ENCODE measurements at regions of chr20 and their contacts with region 1.

Region 1: DNA sequence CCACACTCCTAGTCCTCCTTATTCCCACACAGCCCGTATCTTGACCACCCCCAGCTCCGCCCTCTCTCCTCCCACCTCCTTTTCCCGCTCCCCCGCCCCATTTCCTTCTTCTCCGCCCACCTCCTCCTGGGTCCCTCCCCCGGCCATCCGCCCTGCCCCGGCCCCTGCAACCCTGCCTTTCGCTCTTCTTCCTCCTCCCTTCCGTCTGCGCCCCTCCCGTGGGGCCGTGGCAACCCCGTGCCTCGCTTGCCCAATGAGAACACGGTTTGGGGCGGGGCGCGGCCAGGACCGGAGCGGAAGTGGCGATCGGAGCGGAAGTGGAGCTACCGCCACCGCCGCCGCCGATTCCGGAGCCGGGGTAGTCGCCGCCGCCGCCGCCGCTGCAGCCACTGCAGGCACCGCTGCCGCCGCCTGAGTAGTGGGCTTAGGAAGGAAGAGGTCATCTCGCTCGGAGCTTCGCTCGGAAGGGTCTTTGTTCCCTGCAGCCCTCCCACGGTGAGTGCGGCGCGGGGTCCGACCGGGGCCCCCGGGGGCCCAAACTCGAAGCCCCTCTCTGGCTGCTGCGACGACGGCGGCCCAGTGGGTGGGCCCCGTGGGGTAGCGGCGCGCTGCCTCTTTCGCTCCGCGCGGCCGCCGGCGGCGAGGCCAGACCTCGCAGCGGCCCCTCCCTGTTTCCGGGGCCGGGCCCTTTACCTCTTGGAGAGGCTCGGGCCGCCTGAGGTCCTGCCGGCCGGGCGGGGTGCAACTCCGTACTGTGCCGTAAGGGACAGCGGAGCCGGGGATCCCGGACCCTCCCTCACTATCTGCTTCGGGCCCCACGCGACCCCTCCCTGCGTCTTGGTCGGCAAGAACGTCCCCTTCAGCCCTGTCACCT is at the start of gene YWHAB:
- DNase-seq: peak; percentile 98
- H3K4me3 ChIP-seq: peak within 1 kb of the TSS; percentile 89 to 98 (median 97)
- H3K27ac ChIP-seq: peak within 1 kb of the TSS; percentile 84
- H3K4me1 ChIP-seq: peaks cover 33% of the 10 kb centered on the region
- H3K27me3 ChIP-seq: no peaks in the 10 kb centered on the region
- CTCF ChIP-seq: no peak
- POLR2A ChIP-seq: peak; percentile 54
- total RNA-seq, gene YWHAB: 255 and 256 TPM in 2 replicates

Region 2: GRCh38 chr20:44475694-44476560 is 409.7 kb before region 1 on chr20 and contains the start of gene TTPAL:
- CTCF ChIA-PET with region 1: no interaction called
- POLR2A ChIA-PET with region 1: no interaction called
- dilution Hi-C with region 1: no loop called
- intact Hi-C with region 1: loop called (anchors 10 kb)
- DNase-seq: peak; percentile 83
- H3K4me3 ChIP-seq: peak within 1 kb of the TSS; percentile 42 to 68 (median 52)
- H3K27ac ChIP-seq: peak within 1 kb of the TSS; percentile 56
- H3K4me1 ChIP-seq: peaks cover 13% of the 10 kb centered on the region
- H3K27me3 ChIP-seq: peaks cover 0 to 4% of the 10 kb centered on the region in 2 experiments
- CTCF ChIP-seq: peak; percentile 4 to 28
- POLR2A ChIP-seq: peak; percentile 91
- total RNA-seq, gene TTPAL: 8.0 and 8.7 TPM in 2 replicates

Region 3: DNA sequence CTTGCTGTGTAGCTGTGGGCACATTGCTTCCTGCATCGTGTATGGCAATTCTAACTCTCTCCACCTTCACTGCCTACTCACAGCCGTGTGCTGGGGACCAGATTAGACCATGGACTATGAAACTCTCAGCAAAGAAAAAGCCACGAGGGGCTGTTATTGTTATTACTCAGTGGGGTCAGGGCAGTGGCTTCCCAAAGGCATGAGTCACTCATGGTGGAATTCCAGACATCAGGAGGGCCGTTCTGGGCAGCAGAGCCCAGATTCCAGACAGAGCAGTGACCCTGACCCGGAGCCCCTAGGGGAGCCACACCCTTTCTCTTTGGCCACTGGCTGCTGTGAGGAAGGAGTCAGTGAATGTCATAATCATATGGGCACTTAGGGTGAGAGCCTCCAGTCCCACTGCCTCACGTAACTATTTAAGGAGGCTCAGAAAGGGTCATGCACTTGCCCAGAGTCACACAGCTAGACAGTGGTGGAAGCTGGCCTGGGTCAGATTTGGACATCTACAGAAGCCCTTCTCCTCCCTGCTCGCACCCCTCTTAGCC is 192.6 kb before region 1 on chr20:
- CTCF ChIA-PET with region 1: interaction called, 3 read pairs
- POLR2A ChIA-PET with region 1: no interaction called
- dilution Hi-C with region 1: no loop called
- intact Hi-C with region 1: loop called (anchors 2 kb)
- DNase-seq: peak; percentile 98
- H3K4me3 ChIP-seq: no peak overlapping the region
- H3K27ac ChIP-seq: peak overlapping the region; percentile 93
- H3K4me1 ChIP-seq: peaks cover 33% of the 10 kb centered on the region
- H3K27me3 ChIP-seq: no peaks in the 10 kb centered on the region
- CTCF ChIP-seq: no peak
- POLR2A ChIP-seq: no peak

Region 4: DNA sequence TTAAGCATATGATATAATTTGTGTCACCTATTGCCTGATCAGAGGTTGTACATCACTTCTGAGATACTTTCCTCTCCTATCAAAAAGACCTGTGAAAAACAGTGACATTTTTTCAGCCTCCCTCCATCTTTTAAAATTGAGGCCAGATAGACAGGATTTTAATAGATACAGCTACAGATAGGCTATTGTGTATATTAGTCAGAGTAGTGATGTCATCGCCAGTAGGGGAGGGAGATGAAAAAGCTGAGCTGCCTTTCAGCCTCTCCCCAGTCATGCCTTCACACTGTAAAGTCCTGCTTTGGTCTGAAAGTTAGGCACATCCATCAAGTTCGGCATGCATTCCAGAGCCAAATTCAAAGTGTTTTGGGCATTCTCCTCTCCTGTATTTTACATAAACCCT is 16.3 kb after region 1 on chr20:
- CTCF ChIA-PET with region 1: interaction called, 12 read pairs
- POLR2A ChIA-PET with region 1: interaction called, 3 read pairs
- dilution Hi-C with region 1: no loop called
- intact Hi-C with region 1: loop called (anchors 2 kb)
- DNase-seq: no peak
- H3K4me3 ChIP-seq: no peak overlapping the region
- H3K27ac ChIP-seq: no peak overlapping the region
- H3K4me1 ChIP-seq: peaks cover 12% of the 10 kb centered on the region
- H3K27me3 ChIP-seq: no peaks in the 10 kb centered on the region
- CTCF ChIP-seq: no peak
- POLR2A ChIP-seq: no peak

Region 5: DNA sequence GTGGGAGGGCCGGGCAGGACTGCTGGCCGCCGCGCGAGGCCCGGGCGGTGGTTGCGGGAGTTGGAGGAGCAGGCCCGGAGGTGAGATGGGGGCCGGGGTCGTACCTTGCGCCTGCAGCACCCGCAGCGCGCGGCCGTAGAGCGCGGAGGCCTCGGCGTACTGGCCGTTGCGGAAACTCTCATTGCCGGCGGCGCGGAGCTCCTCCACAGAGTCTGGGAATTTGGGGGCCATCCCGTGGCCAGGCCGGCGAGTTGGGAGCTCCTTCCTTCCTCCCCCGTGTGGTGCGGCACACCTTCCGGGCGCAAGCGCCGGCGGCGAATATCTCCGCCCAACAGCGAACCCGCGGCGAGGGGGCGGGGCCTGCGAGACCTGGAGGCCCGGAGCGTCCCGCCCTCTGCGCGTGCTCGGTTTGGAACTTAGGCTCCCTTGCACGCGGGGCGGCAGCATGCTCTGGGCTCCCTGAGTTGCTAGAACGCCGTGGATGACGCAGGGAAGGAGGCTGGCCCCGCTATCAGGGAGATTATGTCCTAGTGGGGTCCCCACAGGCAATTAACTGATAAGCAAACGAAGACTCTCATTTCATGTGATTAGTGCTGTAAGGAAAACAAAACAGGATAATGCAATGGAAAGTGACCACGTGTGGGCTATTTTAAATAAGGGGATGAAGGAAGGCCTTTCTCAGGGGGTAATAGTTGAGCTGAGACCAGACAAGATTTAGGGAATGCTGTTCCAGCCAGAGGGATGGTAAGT is 74.6 kb after region 1 on chr20 and contains the start of gene TOMM34:
- CTCF ChIA-PET with region 1: interaction called, 4 read pairs
- POLR2A ChIA-PET with region 1: no interaction called
- dilution Hi-C with region 1: no loop called
- intact Hi-C with region 1: loop called (anchors 2 kb)
- DNase-seq: peak; percentile 90
- H3K4me3 ChIP-seq: peak within 1 kb of the TSS; percentile 90 to 96 (median 95)
- H3K27ac ChIP-seq: peak within 1 kb of the TSS; percentile 68
- H3K4me1 ChIP-seq: peaks cover 28% of the 10 kb centered on the region
- H3K27me3 ChIP-seq: no peaks in the 10 kb centered on the region
- CTCF ChIP-seq: no peak
- POLR2A ChIP-seq: peak; percentile 85
- total RNA-seq, gene TOMM34: 37.0 and 44.2 TPM in 2 replicates

Region 6: DNA sequence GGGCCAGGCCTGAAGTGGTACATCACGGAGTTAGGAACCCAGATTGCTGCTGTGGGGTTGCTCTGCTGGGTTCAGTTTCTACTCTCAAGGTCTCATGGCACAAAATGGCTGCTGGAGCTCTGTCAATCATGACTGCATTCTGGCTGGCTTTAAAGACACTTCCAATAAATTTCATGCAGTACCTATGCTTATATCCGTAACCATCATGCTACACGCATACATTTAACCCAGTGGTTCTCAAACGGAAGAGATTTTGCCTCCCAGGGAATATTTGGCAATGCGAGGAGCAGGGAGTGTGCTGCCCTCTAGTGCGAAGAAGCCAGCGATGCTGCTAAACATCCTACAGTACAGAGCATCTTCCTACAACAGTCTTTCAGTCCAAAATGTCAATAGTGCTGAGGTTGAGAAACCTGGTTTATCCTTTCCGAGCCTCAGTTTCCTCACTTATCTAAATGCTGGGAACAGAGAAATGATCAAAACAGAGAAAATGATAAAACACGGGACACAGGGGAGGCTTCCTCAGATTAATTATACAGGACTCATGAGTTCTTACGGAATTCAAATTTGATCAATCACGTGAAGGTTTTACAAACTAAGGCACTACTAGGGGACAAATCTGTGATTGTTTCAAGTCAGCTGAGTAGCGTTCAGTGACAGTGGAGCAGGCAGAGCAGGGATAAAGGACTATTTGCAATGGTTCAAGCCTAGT is 1814.2 kb after region 1 on chr20:
- CTCF ChIA-PET with region 1: no interaction called
- POLR2A ChIA-PET with region 1: no interaction called
- dilution Hi-C with region 1: no loop called
- intact Hi-C with region 1: loop called (anchors 10 kb)
- DNase-seq: peak; percentile 30
- H3K4me3 ChIP-seq: no peak overlapping the region
- H3K27ac ChIP-seq: no peak overlapping the region
- H3K4me1 ChIP-seq: no peaks in the 10 kb centered on the region
- H3K27me3 ChIP-seq: peaks cover 3% of the 10 kb centered on the region in 2 experiments
- CTCF ChIP-seq: peak; percentile 68 to 75
- POLR2A ChIP-seq: no peak